ENCODE measurements at regions of chr7 and their contacts with region 1.

Region 1: DNA sequence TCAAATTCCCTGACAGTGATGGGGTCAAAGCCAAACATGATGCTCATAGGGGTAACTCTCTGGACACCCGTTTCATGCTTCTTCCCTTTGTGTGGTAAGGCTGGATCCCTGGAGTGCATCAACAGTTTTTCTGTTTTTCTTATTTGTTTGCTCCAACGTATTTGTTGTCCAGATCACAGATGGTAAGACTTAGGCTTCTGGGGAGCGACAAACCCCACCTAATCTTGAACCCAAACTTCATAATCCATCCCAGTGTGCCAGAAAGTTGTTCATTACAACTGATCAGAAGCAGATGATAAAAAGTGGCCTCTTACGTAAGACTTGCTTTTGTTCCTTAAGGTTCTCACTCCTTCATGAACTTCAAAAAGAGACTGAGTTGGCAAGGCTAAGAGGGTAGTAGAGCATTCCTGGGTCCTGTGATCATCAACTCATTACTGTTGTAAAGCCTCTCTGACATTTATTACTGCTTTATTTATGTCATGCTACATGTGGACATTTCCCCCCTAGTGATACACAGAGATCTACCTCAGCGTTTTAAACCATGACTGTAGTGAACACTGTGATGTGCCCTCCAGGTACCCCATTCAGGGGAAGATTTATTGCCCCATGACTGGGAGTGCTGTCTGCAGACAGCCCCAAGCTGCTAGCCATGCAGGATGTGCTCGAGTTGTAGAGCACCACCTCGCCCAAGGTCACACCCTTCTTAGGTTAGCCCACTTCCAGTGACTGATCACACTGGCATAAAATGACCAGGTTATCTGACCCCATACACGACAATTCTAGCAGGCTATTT is 125.5 kb downstream of the CCDC71L start:
- DNase-seq: no peak
- H3K4me3 ChIP-seq: no peak overlapping the region
- H3K27ac ChIP-seq: no peak overlapping the region
- H3K4me1 ChIP-seq: no peaks in the 10 kb centered on the region
- H3K27me3 ChIP-seq: no peaks in the 10 kb centered on the region
- CTCF ChIP-seq: no peak
- POLR2A ChIP-seq: no peak

Region 2: GRCh38 chr7:106465704-106466468 is 69.5 kb before region 1 on chr7:
- intact Hi-C with region 1: no loop called
- DNase-seq: peak; percentile 11 to 20
- H3K4me3 ChIP-seq: no peak overlapping the region
- H3K27ac ChIP-seq: no peak overlapping the region
- H3K4me1 ChIP-seq: no peaks in the 10 kb centered on the region
- H3K27me3 ChIP-seq: no peaks in the 10 kb centered on the region
- CTCF ChIP-seq: no peak
- POLR2A ChIP-seq: no peak

Region 3: DNA sequence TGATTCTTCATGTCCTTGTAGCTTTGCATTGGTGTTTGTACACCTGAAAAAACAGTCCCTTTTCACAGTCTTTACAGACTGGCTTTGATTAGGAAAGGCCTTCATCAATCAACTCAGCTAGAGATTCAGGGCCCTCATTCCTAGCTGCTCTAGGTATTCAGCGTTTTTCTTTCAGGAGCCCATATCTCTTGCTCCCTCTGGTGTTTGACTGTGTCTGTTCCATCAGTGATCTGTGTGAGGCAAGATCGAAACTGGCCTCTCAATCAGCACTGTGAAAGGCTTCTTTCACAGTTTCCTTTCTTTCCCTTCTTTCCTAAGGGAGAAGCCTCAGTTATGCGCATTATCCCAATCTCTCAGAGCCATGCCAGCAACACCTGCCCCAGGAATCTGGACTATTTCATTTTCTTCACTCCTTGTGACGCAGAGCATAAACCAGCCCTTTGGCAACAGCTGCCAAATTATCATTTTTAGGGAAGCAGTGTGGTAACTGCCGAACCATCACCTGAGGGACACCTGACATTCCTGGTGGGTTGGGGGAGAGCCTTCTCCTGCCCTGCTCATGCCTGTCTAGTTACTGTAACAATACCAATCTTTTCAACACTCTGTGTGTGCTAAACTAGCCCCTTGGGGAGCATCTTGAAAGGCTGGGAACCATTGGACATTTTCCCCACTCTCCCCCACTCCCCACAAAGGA is 201.2 kb after region 1 on chr7:
- intact Hi-C with region 1: loop called (anchors 10 kb)
- DNase-seq: peak; percentile 7 to 8
- H3K4me3 ChIP-seq: no peak overlapping the region
- H3K27ac ChIP-seq: no peak overlapping the region
- H3K4me1 ChIP-seq: peaks cover 0 to 6% of the 10 kb centered on the region in 2 donors
- H3K27me3 ChIP-seq: no peaks in the 10 kb centered on the region
- CTCF ChIP-seq: peak in 4 of 6 experiments; percentile 37 to 54 (median 48)
- POLR2A ChIP-seq: no peak